ENCODE measurements at regions of chr22 and their contacts with region 1.

Region 1: DNA sequence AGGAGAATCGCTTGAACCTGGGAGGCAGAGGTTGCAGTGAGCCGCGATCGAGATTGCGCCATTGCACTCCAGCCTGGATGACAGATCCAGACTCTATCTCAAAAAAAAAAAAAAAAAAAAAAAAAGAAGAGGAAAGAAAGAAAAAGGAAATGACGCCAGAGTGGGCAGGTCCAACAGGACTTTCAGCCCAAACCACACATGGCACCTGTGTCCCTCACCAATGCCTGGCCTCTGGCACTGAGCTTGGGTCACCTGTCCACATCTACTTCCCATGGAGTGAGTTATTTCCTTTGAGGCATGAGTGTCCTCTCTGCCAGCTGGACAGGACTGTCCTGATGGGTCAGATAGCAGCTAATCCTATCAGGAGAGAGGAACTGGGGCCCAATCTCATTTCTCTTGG is 15.2 kb upstream of the GCAT start:
- DNase-seq: no peak
- ATAC-seq: no peak
- H3K4me3 ChIP-seq: no peak overlapping the region
- H3K27ac ChIP-seq: no peak overlapping the region
- H3K4me1 ChIP-seq: peaks cover 0 to 7% (median 0%) of the 10 kb centered on the region in 9 donors
- H3K27me3 ChIP-seq: no peaks in the 10 kb centered on the region
- CTCF ChIP-seq: no peak

Region 2: DNA sequence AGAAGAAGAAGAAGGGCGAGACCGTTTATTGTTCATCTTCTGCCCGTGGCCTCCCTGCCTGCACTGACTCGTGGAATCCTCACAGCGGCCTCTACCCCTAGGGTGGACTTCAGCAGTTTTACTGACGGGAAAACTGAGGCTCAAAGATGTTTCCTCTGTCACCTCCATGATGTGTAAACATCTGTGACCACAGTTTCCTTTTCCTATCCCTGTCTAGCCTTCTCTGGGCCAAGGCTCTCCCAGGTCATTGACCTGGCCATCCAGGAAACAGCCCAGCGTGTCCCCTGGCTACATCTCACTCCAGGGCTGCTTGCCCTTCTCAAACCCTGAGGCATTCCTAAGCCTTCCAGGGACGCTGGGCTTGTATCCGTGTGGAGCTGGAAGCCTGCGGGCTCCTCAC is 33.8 kb before region 1 on chr22:
- intact Hi-C with region 1: loop called in 1 of 10 experiments (anchors 5 kb)
- DNase-seq: no peak
- ATAC-seq: no peak
- H3K4me3 ChIP-seq: no peak overlapping the region
- H3K27ac ChIP-seq: no peak overlapping the region
- H3K4me1 ChIP-seq: peaks cover 3 to 26% (median 9%) of the 10 kb centered on the region in 9 donors
- H3K27me3 ChIP-seq: no peaks in the 10 kb centered on the region
- CTCF ChIP-seq: no peak

Region 3: GRCh38 chr22:38017272-38017920 is 224.9 kb after region 1 on chr22:
- intact Hi-C with region 1: no loop called
- DNase-seq: peak; percentile 83 to 85
- ATAC-seq: peak; percentile 72 to 91 (median 85)
- H3K4me3 ChIP-seq: no peak overlapping the region
- H3K27ac ChIP-seq: peak overlapping the region in 7 of 10 donors; percentile 50 to 75 (median 60)
- H3K4me1 ChIP-seq: peaks cover 12 to 24% (median 21%) of the 10 kb centered on the region in 9 donors
- H3K27me3 ChIP-seq: no peaks in the 10 kb centered on the region
- CTCF ChIP-seq: no peak